ENCODE measurements at regions of chr21 and their contacts with region 1.

Region 1: DNA sequence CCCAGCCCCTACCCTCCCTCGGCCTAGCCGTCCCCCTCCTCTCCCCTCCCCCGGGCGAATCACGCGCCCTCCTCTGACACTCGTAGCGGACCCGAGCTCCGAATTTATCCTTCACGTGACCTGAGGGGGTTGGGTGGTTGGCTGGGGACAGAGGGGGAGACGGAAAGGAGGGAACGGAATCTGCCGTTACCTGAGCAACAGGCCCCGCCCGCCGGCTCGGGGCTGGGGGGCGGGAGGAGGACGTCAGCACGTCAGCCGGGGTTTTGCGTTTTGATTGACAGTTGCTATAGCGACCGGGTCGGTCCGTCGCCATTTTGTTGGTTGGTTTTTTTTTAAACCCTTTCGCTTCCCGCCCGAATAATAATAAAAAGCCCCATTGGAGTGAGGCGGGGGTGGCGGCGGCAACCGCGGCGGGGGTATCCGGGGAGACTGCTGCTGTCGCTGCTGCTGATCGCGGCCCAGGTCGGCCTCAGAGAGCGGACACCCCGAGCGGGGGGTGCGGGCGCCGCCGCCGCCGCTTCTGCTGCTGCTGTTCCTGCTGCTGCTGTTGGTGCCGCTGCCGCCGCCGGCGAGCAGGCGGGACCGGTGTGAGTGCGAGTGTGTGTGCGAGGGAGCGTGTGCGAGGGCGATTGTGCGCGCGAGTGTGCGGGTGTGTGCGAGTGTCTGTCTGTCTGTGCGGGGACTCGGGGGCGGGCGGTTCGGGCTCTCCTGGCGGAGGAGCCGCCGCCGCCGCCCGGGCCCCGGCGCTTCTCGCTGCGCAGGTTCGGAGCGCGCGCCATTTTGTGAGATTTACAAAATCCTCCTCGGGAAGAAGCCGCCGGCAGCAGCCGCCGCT is at the start of gene DYRK1A:
- DNase-seq: peak; percentile 99 to 100
- H3K4me3 ChIP-seq: peak within 1 kb of the TSS; percentile 96
- H3K27ac ChIP-seq: peak within 1 kb of the TSS; percentile 100
- H3K4me1 ChIP-seq: peaks cover 0 to 37% (median 11%) of the 10 kb centered on the region in 4 donors
- H3K27me3 ChIP-seq: no peaks in the 10 kb centered on the region
- CTCF ChIP-seq: no peak

Region 2: DNA sequence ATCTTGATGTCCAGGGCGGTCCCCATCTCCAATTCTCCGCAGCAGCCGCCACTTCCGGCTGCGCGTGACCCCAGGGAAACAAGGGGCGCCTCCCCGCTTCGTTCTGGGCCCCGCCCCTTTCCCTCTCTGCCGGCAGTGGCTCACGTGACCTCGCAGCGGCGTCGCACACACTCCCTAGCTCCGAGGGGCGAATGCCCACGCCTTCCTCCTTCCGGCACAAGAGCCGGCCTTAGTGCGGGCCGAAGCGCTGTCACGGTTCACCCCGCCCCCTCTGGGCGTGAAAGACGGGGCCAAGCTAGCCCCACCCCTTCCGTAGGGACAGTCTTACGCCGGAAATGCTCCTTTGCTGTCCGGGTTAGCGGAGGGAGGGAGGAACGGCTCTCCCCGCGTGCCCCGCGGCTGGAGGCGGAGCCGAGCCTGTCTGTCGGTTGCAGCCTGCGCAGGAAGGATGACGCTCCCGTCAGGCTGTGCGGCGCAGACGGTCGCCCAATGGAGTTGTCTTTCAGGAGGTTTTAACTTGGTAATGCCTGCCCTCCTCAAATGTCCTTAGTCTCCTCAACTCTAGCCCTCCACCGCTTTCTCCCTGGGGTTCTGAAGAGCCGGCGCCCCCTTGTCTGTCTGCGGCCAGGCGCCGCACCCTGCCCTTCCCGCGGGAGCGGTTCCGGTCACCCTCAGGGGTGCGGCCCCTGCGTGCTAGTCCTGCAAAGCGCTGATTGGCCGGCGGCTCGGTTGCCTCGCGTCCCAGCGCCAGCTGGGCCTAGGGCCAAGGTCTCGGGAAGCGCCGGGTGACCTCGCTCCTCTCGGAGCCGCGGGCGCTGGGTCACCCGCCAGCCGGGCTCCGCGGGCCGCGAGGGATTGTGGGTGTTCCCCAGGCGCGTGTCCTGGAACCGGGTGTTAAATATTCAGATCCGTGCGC is 99.2 kb before region 1 on chr21 and contains the start of gene VPS26C:
- intact Hi-C with region 1: loop called (anchors 2 kb)
- DNase-seq: peak; percentile 98 to 100
- H3K4me3 ChIP-seq: peak within 1 kb of the TSS; percentile 83 to 99
- H3K27ac ChIP-seq: peak within 1 kb of the TSS; percentile 95 to 98
- H3K4me1 ChIP-seq: peaks cover 0 to 30% (median 17%) of the 10 kb centered on the region in 4 donors
- H3K27me3 ChIP-seq: no peaks in the 10 kb centered on the region
- CTCF ChIP-seq: peak in 1 of 2 experiments; percentile 3

Region 3: DNA sequence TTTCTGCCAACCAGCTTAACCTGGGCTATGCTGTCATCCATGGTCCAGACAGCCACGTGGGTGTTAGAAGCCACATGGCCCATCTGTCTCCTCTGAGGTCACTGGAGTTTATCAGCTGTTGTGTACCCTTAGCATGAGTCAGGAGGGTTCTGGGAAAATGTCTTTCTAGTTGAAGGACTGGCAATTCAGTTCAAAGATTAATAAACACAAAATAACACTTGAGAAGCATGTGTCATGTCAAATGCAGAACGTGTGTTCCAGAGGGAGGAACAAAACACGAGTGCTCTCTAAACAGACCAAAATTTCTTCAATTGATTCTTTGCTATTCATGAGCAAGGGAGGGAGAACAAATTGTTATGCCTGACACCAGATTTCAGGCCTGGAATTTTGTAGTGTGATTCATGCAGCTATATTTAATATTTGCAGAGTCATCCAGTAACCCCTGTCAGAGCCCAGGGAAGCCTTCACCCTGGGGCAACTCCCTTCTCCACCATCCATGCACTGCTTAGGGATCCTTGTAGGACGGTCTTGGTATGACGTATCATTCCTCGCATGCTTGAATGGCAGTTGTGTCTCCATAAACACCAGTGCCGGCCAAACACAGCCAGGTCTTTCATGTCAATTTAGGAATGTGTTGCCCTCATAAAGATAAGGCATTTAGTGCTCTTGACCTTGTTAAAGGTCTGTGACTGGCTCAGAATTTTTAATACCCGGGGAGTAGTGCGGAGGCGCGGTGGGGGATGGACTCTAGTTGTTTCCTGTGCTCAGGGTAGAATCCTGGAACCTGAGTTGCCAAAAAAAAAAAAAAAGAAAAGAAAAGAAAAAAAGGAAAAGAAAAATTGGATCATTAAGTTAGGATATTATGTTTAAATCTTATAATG is 27.8 kb before region 1 on chr21:
- intact Hi-C with region 1: loop called (anchors 2 kb)
- DNase-seq: peak in 1 of 2 donors; percentile 69
- H3K4me3 ChIP-seq: peak overlapping the region; percentile 21 to 31
- H3K27ac ChIP-seq: peak overlapping the region; percentile 77 to 82
- H3K4me1 ChIP-seq: peaks cover 0 to 22% (median 11%) of the 10 kb centered on the region in 4 donors
- H3K27me3 ChIP-seq: no peaks in the 10 kb centered on the region
- CTCF ChIP-seq: no peak

Region 4: DNA sequence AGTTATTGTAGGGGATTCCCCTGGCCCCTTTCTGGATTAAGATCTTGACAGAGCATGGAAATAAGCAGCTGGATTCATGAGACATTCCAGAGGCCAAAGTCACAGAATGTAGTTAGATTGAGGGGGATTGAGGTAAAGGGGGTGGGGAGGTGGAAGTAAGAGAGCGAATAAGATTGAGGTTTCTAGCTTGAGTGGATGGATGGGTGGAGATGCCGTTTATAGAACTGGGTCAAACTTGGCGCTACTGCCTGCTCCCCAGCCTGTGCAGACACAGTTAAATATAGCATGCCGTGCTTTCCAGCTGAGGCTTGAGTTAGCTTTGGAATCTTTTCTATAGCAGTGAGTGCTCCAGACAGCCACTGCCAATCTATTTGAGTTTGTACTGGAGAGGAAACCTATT is 85.5 kb after region 1 on chr21:
- intact Hi-C with region 1: loop called (anchors 10 kb)
- DNase-seq: peak in 1 of 2 donors; percentile 73
- H3K4me3 ChIP-seq: no peak overlapping the region
- H3K27ac ChIP-seq: peak overlapping the region; percentile 31 to 40
- H3K4me1 ChIP-seq: peaks cover 0 to 88% (median 42%) of the 10 kb centered on the region in 4 donors
- H3K27me3 ChIP-seq: no peaks in the 10 kb centered on the region
- CTCF ChIP-seq: no peak

Region 5: GRCh38 chr21:37563641-37564340 is 197.1 kb after region 1 on chr21:
- intact Hi-C with region 1: loop called (anchors 5 kb)
- DNase-seq: peak; percentile 93 to 96
- H3K4me3 ChIP-seq: peak overlapping the region; percentile 63 to 70
- H3K27ac ChIP-seq: peak overlapping the region; percentile 84 to 86
- H3K4me1 ChIP-seq: peaks cover 0 to 21% (median 16%) of the 10 kb centered on the region in 4 donors
- H3K27me3 ChIP-seq: no peaks in the 10 kb centered on the region
- CTCF ChIP-seq: peak; percentile 44 to 47

Measured in tibial artery (tissue), 4 donors.